Posterior cingulate gyrus (tissue), 11 donors: ENCODE measurements at regions of chr9 and their contacts with region 1.

Region 1: DNA sequence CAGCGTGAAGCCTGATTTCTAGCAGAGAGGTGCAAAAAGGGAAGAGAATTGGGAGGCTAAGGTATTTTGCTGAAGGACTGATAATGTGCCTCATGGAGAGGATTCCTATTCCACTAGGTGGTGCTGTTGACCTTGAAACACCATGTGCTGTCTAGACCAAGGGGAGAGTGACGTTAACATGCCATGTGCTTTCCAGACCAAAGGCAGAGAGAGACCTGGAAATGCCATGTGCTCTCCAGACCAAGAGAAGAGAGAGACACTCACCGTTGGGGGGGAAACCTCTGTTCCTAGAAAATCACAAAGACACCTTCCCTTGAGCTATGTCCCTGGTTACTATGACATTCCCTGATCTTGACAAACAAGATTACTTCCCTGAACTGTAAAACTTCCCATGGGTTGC is 286.0 kb upstream of the TUSC1 start:
- DNase-seq: peak in 2 of 10 donors; percentile 7 to 20

Region 2: GRCh38 chr9:26247861-26248260 is 283.6 kb after region 1 on chr9:
- intact Hi-C with region 1: no loop called
- DNase-seq: no peak

Region 3: DNA sequence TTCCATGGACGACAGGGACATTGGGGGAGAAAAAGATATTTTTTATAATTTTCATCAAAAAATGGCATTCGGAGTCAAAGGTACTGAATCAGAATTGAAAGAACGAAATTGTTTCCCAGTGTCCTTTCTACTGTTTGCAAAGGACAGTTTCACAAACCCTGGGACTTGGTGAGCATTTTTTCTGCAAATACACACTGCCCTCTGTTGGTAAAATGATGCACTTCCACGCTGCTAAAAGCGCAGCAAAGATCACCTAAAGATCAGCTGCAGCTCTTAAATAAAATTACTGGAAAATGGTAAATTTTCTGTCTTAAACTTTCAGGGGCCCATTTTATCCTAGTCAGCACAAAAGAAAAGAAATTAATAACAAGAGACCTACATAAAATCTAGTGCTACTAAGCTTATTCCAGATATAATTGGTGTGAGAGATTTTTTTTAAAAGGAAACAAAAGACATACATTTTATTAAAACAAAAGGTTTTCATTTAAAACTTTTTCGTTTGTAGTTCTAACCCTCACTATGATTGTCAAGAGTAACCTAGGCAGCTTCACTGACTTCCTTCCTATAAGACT is 362.3 kb after region 1 on chr9:
- intact Hi-C with region 1: loop called (anchors 1 kb)
- DNase-seq: peak in 5 of 10 donors; percentile 27 to 81 (median 42)

Region 4: DNA sequence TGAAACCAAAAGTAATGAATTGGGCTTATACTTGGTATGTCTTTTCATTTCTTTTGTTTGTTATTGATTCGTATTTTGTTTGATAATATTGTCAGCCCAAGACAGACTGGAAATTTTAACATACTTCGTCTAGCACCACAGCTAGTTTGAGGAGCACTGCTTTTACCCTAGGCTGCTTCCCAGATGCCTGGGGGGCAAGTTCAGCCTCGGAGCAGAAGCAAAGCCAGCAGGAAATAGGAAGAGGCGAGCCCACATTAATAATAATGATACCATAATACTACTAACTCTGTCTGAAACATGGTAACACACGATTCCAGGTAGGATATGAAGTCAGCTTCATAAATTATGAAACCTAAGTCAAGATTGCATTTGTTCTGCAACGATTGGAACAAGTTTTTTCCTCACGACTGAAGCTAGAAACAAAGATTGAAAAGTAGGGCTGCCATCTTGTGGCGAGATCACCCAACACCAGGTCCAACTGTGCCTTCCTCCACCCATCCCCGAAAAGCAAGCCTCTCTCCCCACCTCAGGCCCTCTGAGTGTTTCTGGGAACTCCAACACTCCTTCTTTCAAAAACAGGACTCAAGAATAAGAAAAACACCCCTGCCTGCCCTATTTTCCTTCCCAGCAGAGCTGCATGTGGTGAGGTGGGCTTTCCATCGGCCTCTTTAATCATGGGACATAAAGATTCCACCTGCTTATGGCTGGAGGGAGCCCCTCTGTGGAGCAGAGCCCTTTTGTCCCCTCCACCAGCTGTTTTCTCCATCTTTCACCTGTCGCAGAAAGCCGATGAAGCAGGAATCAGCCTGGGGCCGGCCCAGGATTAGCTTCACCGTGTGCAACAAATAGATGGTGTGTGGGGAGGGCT is 692.0 kb after region 1 on chr9:
- intact Hi-C with region 1: loop called (anchors 10 kb)
- DNase-seq: peak in 7 of 10 donors; percentile 29 to 88 (median 49)